ENCODE measurements at regions of chr7 and their contacts with region 1.

Region 1: GRCh38 chr7:6205971-6206660 is 66.3 kb downstream of the CYTH3 start:
- DNase-seq: no peak
- ATAC-seq: no peak
- H3K4me3 ChIP-seq: no peak overlapping the region
- H3K4me3 Mint-ChIP-seq: no peak overlapping the region
- H3K27ac ChIP-seq: no peak overlapping the region
- H3K27ac Mint-ChIP-seq: no peak overlapping the region
- H3K4me1 ChIP-seq: no peaks in the 10 kb centered on the region
- H3K4me1 Mint-ChIP-seq: peaks cover 0 to 2% (median 0%) of the 10 kb centered on the region in 3 donors
- H3K27me3 ChIP-seq: no peaks in the 10 kb centered on the region
- H3K27me3 Mint-ChIP-seq: no peaks in the 10 kb centered on the region

Region 2: DNA sequence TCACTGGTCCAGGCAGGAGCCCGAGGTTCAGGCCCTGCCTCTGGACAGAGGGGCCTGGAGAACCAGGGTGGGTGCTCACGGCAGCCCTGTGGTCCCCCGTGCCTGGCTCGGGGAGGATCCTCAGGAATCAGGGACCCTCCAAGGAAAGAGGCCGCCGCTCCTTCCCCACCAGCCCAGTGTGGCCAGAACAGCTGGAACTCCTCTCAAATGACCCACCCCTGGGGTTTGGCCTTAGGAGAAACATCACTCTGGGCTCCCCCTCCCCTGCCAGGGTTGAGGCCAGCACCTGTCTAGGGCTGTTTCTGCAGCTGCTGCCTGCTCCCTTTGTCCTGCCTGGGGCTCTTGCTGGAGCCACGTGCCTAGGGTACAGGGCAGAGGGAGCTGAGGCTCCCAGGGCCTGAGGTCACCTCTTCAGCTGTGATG is 585.6 kb before region 1 on chr7:
- CTCF ChIA-PET with region 1: no interaction called
- POLR2A ChIA-PET with region 1: interaction called in 1 of 2 experiments, 11 read pairs
- DNase-seq: no peak
- ATAC-seq: no peak
- H3K4me3 ChIP-seq: no peak overlapping the region
- H3K4me3 Mint-ChIP-seq: no peak overlapping the region
- H3K27ac ChIP-seq: no peak overlapping the region
- H3K27ac Mint-ChIP-seq: no peak overlapping the region
- H3K4me1 ChIP-seq: no peaks in the 10 kb centered on the region
- H3K4me1 Mint-ChIP-seq: no peaks in the 10 kb centered on the region
- H3K27me3 ChIP-seq: no peaks in the 10 kb centered on the region
- H3K27me3 Mint-ChIP-seq: no peaks in the 10 kb centered on the region